Posterior vena cava (tissue), 2 donors: ENCODE measurements at regions of chr7 and their contacts with region 1.

Region 1: DNA sequence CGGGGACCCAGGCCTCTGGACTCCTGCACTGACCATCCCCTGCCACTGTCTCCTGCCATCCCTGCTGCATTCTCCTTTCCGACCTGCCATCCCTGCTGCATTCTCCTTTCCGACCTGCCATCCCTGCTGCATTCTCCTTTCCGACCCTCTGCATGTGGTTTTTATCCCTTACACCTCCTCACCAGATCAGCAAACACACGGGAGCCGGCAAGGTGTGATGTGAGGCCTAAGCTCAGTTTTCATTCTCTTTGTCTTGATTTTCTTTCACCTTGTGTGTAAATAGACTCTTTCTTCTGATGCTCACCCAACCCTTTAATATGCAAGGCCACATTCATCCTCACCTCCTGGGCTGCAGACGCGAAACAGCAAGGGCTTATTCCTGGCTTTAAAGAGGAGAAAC is 11.4 kb downstream of the PLXNA4 start:
- DNase-seq: no peak

Region 2: DNA sequence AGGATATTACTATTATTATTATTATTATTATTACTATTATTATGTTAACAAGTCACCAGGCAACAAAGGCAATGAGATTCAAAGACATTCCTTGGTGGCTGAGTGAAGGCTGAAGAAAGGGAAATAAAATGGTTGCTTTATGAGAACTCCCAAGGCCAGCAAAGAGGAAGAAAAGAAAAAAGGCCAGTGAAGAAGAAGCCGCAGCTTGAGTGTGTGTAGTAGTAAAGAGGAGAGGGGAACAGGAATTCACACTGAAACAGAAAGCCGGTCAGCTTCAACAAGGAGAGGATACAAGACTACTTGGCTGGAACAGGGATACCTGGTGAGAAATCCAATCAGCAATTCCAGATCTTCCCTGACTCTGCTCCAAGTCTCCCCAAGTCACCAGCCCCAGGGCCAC is 30.9 kb before region 1 on chr7:
- intact Hi-C with region 1: loop called in 1 of 2 experiments (anchors 1 kb)
- DNase-seq: no peak

Region 3: GRCh38 chr7:132580717-132581285 is 16.0 kb after region 1 on chr7:
- intact Hi-C with region 1: no loop called
- DNase-seq: peak; percentile 83